GM12878 (cell line): ENCODE measurements at regions of chr12 and their contacts with region 1.

Region 1: DNA sequence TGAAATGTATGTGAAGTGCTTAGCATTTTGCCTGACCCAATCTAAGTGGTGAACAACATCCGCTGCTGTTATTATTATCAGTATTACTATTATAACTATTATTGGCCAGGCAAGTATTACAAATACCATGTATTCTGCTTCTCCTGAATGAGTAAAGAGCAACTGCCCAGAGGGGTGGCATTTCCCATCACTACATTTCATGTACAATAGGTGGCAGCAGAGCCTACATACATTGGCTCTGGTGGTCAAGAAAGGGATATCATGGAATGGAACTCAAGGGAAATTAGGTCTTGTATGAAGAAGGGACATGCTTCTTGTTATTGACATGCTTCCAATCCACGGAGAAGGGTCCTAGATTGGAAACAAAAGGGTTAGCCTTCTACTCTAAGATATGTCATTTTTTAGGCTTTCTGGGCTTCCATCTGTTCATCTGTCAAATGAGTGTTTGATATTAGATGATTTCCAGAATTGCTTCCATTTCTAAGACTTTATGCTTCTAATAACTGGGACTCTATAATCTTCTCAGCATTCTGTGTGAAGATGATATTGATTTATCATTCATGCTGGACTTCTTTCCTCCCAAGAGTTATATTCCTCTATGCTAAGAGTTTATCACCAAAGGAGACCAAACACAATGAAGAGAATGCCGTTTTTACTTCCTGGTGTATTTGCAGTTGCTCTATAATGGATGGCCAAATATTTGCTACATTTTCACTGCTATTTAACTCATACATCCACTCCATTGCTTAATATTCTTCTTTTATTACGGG is 239.1 kb downstream of the SSPN start:
- DNase-seq: no peak
- ATAC-seq: peak; percentile 92
- H3K4me3 ChIP-seq: no peak overlapping the region
- H3K27ac ChIP-seq: no peak overlapping the region
- H3K4me1 ChIP-seq: no peaks in the 10 kb centered on the region
- H3K27me3 ChIP-seq: no peaks in the 10 kb centered on the region
- CTCF ChIP-seq: peak; percentile 73 to 77 (median 75)
- EP300 ChIP-seq: no peak
- POLR2A ChIP-seq: no peak
- RAD21 ChIP-seq: peak; percentile 77

Region 2: GRCh38 chr12:26340649-26341048 is 93.8 kb before region 1 on chr12:
- CTCF ChIA-PET with region 1: no interaction called
- POLR2A ChIA-PET with region 1: no interaction called
- RAD21 ChIA-PET with region 1: no interaction called
- SMC1A ChIA-PET with region 1: no interaction called
- in situ Hi-C with region 1: no loop called
- intact Hi-C with region 1: no loop called
- DNase-seq: peak; percentile 37
- ATAC-seq: peak; percentile 87
- H3K4me3 ChIP-seq: no peak overlapping the region
- H3K27ac ChIP-seq: no peak overlapping the region
- H3K4me1 ChIP-seq: peaks cover 20% of the 10 kb centered on the region
- H3K27me3 ChIP-seq: no peaks in the 10 kb centered on the region
- CTCF ChIP-seq: no peak
- EP300 ChIP-seq: no peak
- POLR2A ChIP-seq: no peak
- RAD21 ChIP-seq: no peak

Region 3: GRCh38 chr12:26471560-26471959 is 37.1 kb after region 1 on chr12:
- CTCF ChIA-PET with region 1: no interaction called
- POLR2A ChIA-PET with region 1: no interaction called
- RAD21 ChIA-PET with region 1: interaction called, 3 read pairs
- SMC1A ChIA-PET with region 1: interaction called, 4 read pairs
- in situ Hi-C with region 1: no loop called
- intact Hi-C with region 1: loop called (anchors 2 kb)
- DNase-seq: peak; percentile 82
- ATAC-seq: peak; percentile 84
- H3K4me3 ChIP-seq: peak overlapping the region; percentile 32; the same call in 1 of the 2 replicates
- H3K27ac ChIP-seq: peak overlapping the region; percentile 27; the same call in 1 of the 2 replicates
- H3K4me1 ChIP-seq: peaks cover 35% of the 10 kb centered on the region
- H3K27me3 ChIP-seq: no peaks in the 10 kb centered on the region
- CTCF ChIP-seq: peak in 1 of 3 experiments; percentile 21; a peak in 1 of 6 replicates
- EP300 ChIP-seq: peak; percentile 82 to 87; a peak in 3 of 4 replicates
- POLR2A ChIP-seq: no peak
- RAD21 ChIP-seq: peak; percentile 36; the same call in 1 of the 2 replicates

Region 4: GRCh38 chr12:26523708-26524150 is 89.2 kb after region 1 on chr12:
- CTCF ChIA-PET with region 1: interaction called, 9 read pairs
- POLR2A ChIA-PET with region 1: no interaction called
- RAD21 ChIA-PET with region 1: no interaction called
- SMC1A ChIA-PET with region 1: interaction called, 4 read pairs
- in situ Hi-C with region 1: no loop called
- intact Hi-C with region 1: loop called (anchors 5 kb)
- DNase-seq: no peak
- ATAC-seq: no peak
- H3K4me3 ChIP-seq: no peak overlapping the region
- H3K27ac ChIP-seq: no peak overlapping the region
- H3K4me1 ChIP-seq: peaks cover 2% of the 10 kb centered on the region; the same call in 1 of the 2 replicates
- H3K27me3 ChIP-seq: no peaks in the 10 kb centered on the region
- CTCF ChIP-seq: no peak
- EP300 ChIP-seq: no peak
- POLR2A ChIP-seq: no peak
- RAD21 ChIP-seq: no peak

Region 5: GRCh38 chr12:26608273-26608672 is 173.8 kb after region 1 on chr12:
- CTCF ChIA-PET with region 1: no interaction called
- POLR2A ChIA-PET with region 1: no interaction called
- RAD21 ChIA-PET with region 1: no interaction called
- SMC1A ChIA-PET with region 1: no interaction called
- in situ Hi-C with region 1: no loop called
- intact Hi-C with region 1: no loop called
- DNase-seq: no peak
- ATAC-seq: no peak
- H3K4me3 ChIP-seq: no peak overlapping the region
- H3K27ac ChIP-seq: no peak overlapping the region
- H3K4me1 ChIP-seq: no peaks in the 10 kb centered on the region
- H3K27me3 ChIP-seq: no peaks in the 10 kb centered on the region
- CTCF ChIP-seq: no peak
- EP300 ChIP-seq: no peak
- POLR2A ChIP-seq: no peak
- RAD21 ChIP-seq: no peak

Region 6: DNA sequence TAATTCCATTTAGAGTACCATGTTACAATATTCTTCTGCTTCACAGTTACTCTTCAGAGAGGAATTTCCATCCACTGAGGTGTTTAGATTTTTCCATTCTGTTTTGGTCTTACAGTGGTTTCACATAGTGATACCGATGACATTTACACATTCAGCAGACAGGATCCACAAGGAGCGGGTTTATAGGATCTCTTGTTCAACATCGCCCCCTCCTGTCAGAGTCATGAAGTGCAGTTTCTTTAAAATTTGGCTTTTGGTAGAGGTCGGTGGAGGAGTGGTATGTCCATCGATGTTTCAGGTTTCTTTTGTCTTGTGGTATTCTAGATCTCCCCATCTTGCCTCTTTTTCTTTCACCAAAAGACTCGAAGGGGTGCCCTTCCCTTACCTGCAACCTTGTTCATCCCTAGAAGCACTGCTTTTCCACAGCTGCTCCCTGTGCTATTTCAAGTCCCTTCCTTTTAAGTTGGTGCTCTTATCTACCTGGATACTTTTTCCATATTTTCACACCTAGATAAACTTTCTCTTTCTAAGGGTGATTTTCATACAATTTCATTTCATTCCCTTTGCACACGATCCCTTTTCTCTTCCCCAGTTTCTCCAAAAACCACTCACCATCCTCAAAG is 217.2 kb after region 1 on chr12:
- CTCF ChIA-PET with region 1: interaction called, 3 read pairs
- POLR2A ChIA-PET with region 1: no interaction called
- RAD21 ChIA-PET with region 1: no interaction called
- SMC1A ChIA-PET with region 1: no interaction called
- in situ Hi-C with region 1: no loop called
- intact Hi-C with region 1: loop called (anchors 10 kb)
- DNase-seq: peak; percentile 21
- ATAC-seq: peak; percentile 84
- H3K4me3 ChIP-seq: no peak overlapping the region
- H3K27ac ChIP-seq: no peak overlapping the region
- H3K4me1 ChIP-seq: no peaks in the 10 kb centered on the region
- H3K27me3 ChIP-seq: no peaks in the 10 kb centered on the region
- CTCF ChIP-seq: peak; percentile 55 to 75 (median 73)
- EP300 ChIP-seq: no peak
- POLR2A ChIP-seq: no peak
- RAD21 ChIP-seq: peak; percentile 59

Region 7: DNA sequence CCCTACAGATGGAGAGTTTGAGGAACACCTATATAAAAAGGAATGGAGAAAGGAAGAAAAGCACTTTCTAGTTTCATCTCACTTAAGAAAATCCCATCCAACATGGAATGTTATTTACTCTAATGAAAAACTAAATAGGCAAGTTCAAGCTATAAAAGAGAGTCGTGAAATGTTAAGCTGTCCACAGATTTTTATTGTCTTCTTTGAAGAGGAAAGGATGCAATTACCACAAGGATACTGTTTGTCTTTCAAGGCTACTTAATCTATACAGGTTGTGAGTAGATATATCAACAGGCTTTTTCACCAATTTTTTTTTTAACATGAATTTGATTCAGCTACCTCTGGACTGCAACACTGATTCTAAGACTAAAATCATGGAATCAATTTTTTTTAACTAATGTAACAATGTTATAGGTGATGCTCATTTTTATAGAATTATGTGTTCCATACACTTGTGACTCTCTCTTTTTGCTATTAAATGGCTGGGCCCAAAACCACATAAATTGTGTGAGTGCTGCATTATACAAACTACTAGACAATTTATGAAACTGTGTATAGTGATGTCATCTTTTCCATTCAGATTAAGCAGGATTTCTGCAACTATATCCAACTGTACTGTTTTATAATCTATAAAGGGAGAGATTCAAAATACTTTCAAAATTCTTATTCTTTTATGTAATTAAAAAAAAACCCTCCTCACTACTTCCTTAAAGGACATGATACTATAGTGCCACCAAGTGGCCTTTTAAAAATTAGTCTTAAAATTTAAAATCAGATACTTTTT is 871.4 kb after region 1 on chr12:
- CTCF ChIA-PET with region 1: no interaction called
- POLR2A ChIA-PET with region 1: no interaction called
- RAD21 ChIA-PET with region 1: no interaction called
- SMC1A ChIA-PET with region 1: no interaction called
- in situ Hi-C with region 1: no loop called
- intact Hi-C with region 1: no loop called
- DNase-seq: no peak
- ATAC-seq: peak; percentile 26; the same call in 2 of the 3 replicates
- H3K4me3 ChIP-seq: no peak overlapping the region
- H3K27ac ChIP-seq: no peak overlapping the region
- H3K4me1 ChIP-seq: peaks cover 35% of the 10 kb centered on the region
- H3K27me3 ChIP-seq: no peaks in the 10 kb centered on the region
- CTCF ChIP-seq: peak in 1 of 3 experiments; percentile 15; a peak in 1 of 6 replicates
- EP300 ChIP-seq: no peak
- POLR2A ChIP-seq: no peak
- RAD21 ChIP-seq: peak; percentile 54; the same call in 1 of the 2 replicates